ENCODE measurements at regions of chr14 and their contacts with region 1.

Region 1: DNA sequence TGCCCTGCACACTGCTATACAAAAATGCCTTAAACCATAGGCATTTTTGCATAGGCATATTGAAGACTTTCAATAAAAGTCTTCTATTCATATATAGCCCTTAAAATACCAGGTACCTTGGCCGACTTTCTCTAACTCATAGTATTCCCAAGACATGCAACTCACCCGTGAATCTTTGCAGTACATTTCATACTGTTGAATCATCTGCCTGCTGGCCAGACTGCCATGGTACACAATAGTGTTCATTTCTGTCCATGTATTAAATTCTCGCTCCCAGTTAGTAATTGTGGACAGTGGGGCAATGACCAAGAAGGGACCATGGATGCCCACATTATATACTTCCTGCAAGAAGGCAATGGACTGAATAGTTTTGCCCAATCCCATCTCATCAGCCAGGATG is 24.3 kb upstream of the SUPT16H start:
- DNase-seq: no peak
- ATAC-seq: no peak
- H3K4me3 ChIP-seq: no peak overlapping the region
- H3K4me3 Mint-ChIP-seq: no peak overlapping the region
- H3K27ac ChIP-seq: no peak overlapping the region
- H3K27ac Mint-ChIP-seq: peak overlapping the region in 1 of 9 donors; percentile 28
- H3K4me1 ChIP-seq: no peaks in the 10 kb centered on the region
- H3K4me1 Mint-ChIP-seq: peaks cover 0 to 8% (median 0%) of the 10 kb centered on the region in 7 donors
- H3K27me3 ChIP-seq: no peaks in the 10 kb centered on the region
- H3K27me3 Mint-ChIP-seq: no peaks in the 10 kb centered on the region

Region 2: GRCh38 chr14:21226467-21226866 is 181.7 kb before region 1 on chr14:
- CTCF ChIA-PET with region 1: no interaction called
- POLR2A ChIA-PET with region 1: no interaction called
- intact Hi-C with region 1: no loop called
- DNase-seq: no peak
- ATAC-seq: no peak
- H3K4me3 ChIP-seq: no peak overlapping the region
- H3K4me3 Mint-ChIP-seq: no peak overlapping the region
- H3K27ac ChIP-seq: no peak overlapping the region
- H3K27ac Mint-ChIP-seq: peak overlapping the region in 5 of 9 donors; percentile 2 to 47 (median 37)
- H3K4me1 ChIP-seq: peaks cover 33 to 52% of the 10 kb centered on the region in 2 donors
- H3K4me1 Mint-ChIP-seq: peaks cover 45 to 83% (median 71%) of the 10 kb centered on the region in 7 donors
- H3K27me3 ChIP-seq: no peaks in the 10 kb centered on the region
- H3K27me3 Mint-ChIP-seq: no peaks in the 10 kb centered on the region

Region 3: DNA sequence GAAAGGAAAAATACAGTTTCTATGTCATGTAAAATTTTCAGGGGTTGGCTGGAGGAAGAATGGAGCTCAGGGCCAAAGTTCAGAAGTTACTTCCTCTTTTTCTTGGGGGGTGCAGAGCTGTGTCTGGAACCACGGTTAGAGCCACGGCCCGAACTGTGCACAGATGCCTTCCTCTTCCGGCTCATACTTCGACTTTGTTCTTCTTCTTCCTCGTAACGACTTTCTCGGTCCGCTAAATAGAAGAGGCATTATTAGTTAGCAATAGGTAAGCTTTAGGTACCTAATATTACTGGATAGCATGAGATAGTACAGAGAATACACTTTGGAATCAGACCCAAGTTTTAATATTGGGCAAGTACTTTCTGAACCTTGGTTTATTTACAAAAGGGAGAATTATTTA is 55.6 kb before region 1 on chr14:
- CTCF ChIA-PET with region 1: no interaction called
- POLR2A ChIA-PET with region 1: no interaction called
- intact Hi-C with region 1: loop called in 1 of 2 experiments (anchors 10 kb)
- DNase-seq: no peak
- ATAC-seq: peak; percentile 73
- H3K4me3 ChIP-seq: no peak overlapping the region
- H3K4me3 Mint-ChIP-seq: peak overlapping the region in 1 of 10 donors; percentile 5
- H3K27ac ChIP-seq: no peak overlapping the region
- H3K27ac Mint-ChIP-seq: peak overlapping the region in 6 of 9 donors; percentile 3 to 53 (median 28)
- H3K4me1 ChIP-seq: no peaks in the 10 kb centered on the region
- H3K4me1 Mint-ChIP-seq: peaks cover 0 to 6% (median 0%) of the 10 kb centered on the region in 7 donors
- H3K27me3 ChIP-seq: no peaks in the 10 kb centered on the region
- H3K27me3 Mint-ChIP-seq: no peaks in the 10 kb centered on the region

Region 4: DNA sequence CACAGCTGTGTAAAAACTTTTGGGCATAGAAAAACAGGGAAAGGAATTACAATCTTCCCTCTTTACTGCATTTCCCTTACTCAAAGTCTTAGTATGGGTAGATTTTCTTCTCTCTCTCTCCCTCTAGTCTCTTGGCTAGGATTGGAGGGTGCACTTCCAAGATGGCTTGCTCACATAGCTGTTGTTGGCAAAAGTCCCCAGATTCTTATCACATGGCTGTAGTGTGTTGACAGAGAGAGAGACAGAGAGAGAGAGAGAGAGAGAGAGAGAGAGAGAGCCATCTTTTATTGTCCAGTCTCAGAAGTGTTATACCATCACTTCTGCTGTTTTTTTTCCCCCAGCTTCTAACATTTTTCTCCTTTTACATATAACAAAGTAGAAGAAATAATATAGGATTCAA is 239.2 kb after region 1 on chr14:
- CTCF ChIA-PET with region 1: no interaction called
- POLR2A ChIA-PET with region 1: no interaction called
- intact Hi-C with region 1: no loop called
- DNase-seq: no peak
- ATAC-seq: no peak
- H3K4me3 ChIP-seq: no peak overlapping the region
- H3K4me3 Mint-ChIP-seq: no peak overlapping the region
- H3K27ac ChIP-seq: no peak overlapping the region
- H3K27ac Mint-ChIP-seq: no peak overlapping the region
- H3K4me1 ChIP-seq: no peaks in the 10 kb centered on the region
- H3K4me1 Mint-ChIP-seq: peaks cover 0 to 4% (median 0%) of the 10 kb centered on the region in 7 donors
- H3K27me3 ChIP-seq: no peaks in the 10 kb centered on the region
- H3K27me3 Mint-ChIP-seq: peaks cover 8 to 30% (median 23%) of the 10 kb centered on the region in 5 donors

Measured in naive thymus-derived CD4-positive, alpha-beta T cell (primary cell).